Sigmoid colon (tissue), 7 donors: ENCODE measurements at regions of chr10 and their contacts with region 1.

Region 1: DNA sequence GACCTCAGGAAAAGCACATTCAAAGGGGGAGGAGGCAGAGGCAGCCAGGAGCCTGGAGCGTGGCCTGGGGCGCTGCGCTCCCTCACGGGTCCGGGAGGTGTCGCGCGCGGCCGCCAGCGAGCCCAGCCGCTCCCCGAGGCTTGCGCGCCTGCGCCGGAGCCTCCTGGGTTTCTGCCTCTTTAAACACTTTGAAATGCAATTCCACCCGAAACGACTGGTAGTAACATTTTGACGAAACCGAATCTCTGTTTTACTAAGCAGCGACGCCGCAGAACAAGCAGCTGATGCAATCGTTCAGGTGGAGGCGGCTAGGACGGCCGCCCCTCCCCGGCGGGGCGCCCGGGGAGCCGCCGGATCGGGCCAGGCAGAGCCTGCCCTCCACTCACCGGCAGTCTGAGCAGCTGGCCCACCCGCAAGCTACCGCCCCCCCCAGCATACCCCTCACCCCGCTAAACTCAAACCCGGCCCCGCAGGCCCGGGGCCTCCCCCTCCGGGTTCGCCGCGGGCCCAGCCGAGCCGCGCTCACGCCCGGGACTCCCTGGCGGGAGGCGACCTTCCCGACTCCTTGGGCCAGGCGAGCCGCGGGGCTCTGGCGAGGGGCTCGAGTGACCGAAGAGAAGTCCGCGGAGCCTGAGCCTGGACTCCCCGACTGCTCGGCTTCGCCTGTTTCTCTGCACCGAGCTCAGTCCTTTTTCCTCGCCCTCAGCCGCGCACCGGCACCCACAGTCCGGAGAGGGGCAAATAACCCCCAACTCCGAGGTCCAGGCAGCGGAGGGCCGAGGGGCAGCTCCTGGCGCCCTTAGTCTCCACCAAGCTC is 3.2 kb downstream of the MKX start:
- DNase-seq: peak; percentile 92
- H3K4me3 ChIP-seq: peak overlapping the region; percentile 67 to 78 (median 75)
- H3K27ac ChIP-seq: peak overlapping the region; percentile 95 to 98 (median 97)
- H3K4me1 ChIP-seq: peaks cover 0 to 56% (median 38%) of the 10 kb centered on the region in 4 donors
- H3K27me3 ChIP-seq: peaks cover 0 to 37% (median 10%) of the 10 kb centered on the region in 3 donors
- CTCF ChIP-seq: peak; percentile 53 to 92 (median 80)
- EP300 ChIP-seq: no peak
- POLR2A ChIP-seq: peak in 1 of 2 donors; percentile 59

Region 2: GRCh38 chr10:27383595-27384542 is 358.5 kb before region 1 on chr10:
- intact Hi-C with region 1: no loop called
- DNase-seq: no peak
- H3K4me3 ChIP-seq: no peak overlapping the region
- H3K27ac ChIP-seq: no peak overlapping the region
- H3K4me1 ChIP-seq: no peaks in the 10 kb centered on the region
- H3K27me3 ChIP-seq: no peaks in the 10 kb centered on the region
- CTCF ChIP-seq: no peak
- EP300 ChIP-seq: no peak
- POLR2A ChIP-seq: no peak

Region 3: GRCh38 chr10:27558612-27559020 is 183.8 kb before region 1 on chr10:
- intact Hi-C with region 1: loop called (anchors 5 kb)
- DNase-seq: no peak
- H3K4me3 ChIP-seq: no peak overlapping the region
- H3K27ac ChIP-seq: no peak overlapping the region
- H3K4me1 ChIP-seq: peaks cover 0 to 4% (median 0%) of the 10 kb centered on the region in 4 donors
- H3K27me3 ChIP-seq: no peaks in the 10 kb centered on the region
- CTCF ChIP-seq: peak; percentile 63 to 80 (median 73)
- EP300 ChIP-seq: no peak
- POLR2A ChIP-seq: no peak

Region 4: DNA sequence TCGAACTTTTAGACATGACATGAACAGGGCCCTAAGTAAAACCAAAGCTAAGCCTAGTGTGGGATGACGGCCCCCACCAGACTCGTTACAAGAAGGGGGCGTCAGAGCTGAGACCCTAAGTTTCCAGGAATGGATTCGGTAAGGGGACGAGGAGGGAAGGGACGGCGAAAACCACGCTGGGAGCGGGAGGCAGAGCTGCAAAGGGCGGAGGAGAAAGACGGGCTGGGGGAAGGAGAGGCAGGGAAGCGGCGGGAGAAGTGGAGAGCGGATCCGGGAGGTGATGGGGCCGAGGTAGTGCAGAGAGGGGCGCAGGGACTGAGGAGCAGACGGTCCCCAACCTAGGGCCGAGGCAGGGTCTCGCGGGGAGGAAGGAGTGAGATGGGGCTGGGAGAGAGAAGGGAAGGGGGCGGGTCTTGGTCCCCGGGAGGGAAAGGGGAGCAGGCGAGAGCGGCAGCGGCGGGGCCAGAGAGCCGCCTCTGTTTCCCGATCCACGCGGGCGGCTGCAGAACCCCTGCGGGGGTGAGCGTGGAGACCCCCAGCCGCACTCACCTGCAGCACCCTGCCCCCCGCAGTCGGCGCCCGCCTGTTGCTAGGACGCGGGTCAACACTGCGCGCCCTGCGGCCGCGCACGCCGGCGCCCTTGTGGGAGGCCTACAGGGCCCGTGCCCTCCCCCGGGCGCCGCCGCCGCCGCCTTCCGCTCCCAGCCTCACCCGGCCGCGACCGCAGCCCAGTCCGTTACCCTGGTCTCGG is 256.0 kb after region 1 on chr10:
- intact Hi-C with region 1: loop called (anchors 5 kb)
- DNase-seq: peak; percentile 69
- H3K4me3 ChIP-seq: peak overlapping the region; percentile 48 to 96 (median 72)
- H3K27ac ChIP-seq: peak overlapping the region; percentile 64 to 86 (median 82)
- H3K4me1 ChIP-seq: peaks cover 0 to 9% (median 3%) of the 10 kb centered on the region in 4 donors
- H3K27me3 ChIP-seq: no peaks in the 10 kb centered on the region
- CTCF ChIP-seq: no peak
- EP300 ChIP-seq: no peak
- POLR2A ChIP-seq: no peak

Region 5: GRCh38 chr10:28241741-28242399 is 499.5 kb after region 1 on chr10:
- intact Hi-C with region 1: loop called (anchors 2 kb)
- DNase-seq: no peak
- H3K4me3 ChIP-seq: no peak overlapping the region
- H3K27ac ChIP-seq: no peak overlapping the region
- H3K4me1 ChIP-seq: peaks cover 0 to 24% (median 13%) of the 10 kb centered on the region in 4 donors
- H3K27me3 ChIP-seq: no peaks in the 10 kb centered on the region
- CTCF ChIP-seq: peak; percentile 69 to 95 (median 90)
- EP300 ChIP-seq: no peak
- POLR2A ChIP-seq: no peak

Region 6: GRCh38 chr10:28381903-28382347 is 639.5 kb after region 1 on chr10:
- intact Hi-C with region 1: loop called (anchors 5 kb)
- DNase-seq: peak; percentile 92
- H3K4me3 ChIP-seq: no peak overlapping the region
- H3K27ac ChIP-seq: peak overlapping the region in 1 of 4 donors; percentile 1
- H3K4me1 ChIP-seq: peaks cover 0 to 4% (median 1%) of the 10 kb centered on the region in 4 donors
- H3K27me3 ChIP-seq: no peaks in the 10 kb centered on the region
- CTCF ChIP-seq: peak; percentile 92 to 98 (median 96)
- EP300 ChIP-seq: no peak
- POLR2A ChIP-seq: no peak

Region 7: GRCh38 chr10:28684986-28685589 is 942.7 kb after region 1 on chr10:
- intact Hi-C with region 1: no loop called
- DNase-seq: no peak
- H3K4me3 ChIP-seq: no peak overlapping the region
- H3K27ac ChIP-seq: no peak overlapping the region
- H3K4me1 ChIP-seq: peaks cover 0 to 20% (median 10%) of the 10 kb centered on the region in 4 donors
- H3K27me3 ChIP-seq: no peaks in the 10 kb centered on the region
- CTCF ChIP-seq: no peak
- EP300 ChIP-seq: no peak
- POLR2A ChIP-seq: no peak